ENCODE measurements at regions of chr1 and their contacts with region 1.

Region 1: GRCh38 chr1:171226747-171227370 is 21.4 kb upstream of the FMO1 start:
- DNase-seq: peak in 1 of 3 donors; percentile 30
- ATAC-seq: peak; percentile 78 to 79
- H3K4me3 ChIP-seq: no peak overlapping the region
- H3K27ac ChIP-seq: no peak overlapping the region
- H3K4me1 ChIP-seq: no peaks in the 10 kb centered on the region
- H3K27me3 ChIP-seq: no peaks in the 10 kb centered on the region

Region 2: GRCh38 chr1:170967042-170967910 is 259.6 kb before region 1 on chr1:
- intact Hi-C with region 1: loop called in 2 of 4 experiments (anchors 10 kb)
- DNase-seq: no peak
- ATAC-seq: peak; percentile 52 to 62
- H3K4me3 ChIP-seq: no peak overlapping the region
- H3K27ac ChIP-seq: no peak overlapping the region
- H3K4me1 ChIP-seq: no peaks in the 10 kb centered on the region
- H3K27me3 ChIP-seq: no peaks in the 10 kb centered on the region

Region 3: GRCh38 chr1:171081314-171081753 is 145.5 kb before region 1 on chr1:
- intact Hi-C with region 1: loop called in 2 of 4 experiments (anchors 2 to 5 kb)
- DNase-seq: no peak
- ATAC-seq: peak; percentile 42 to 66
- H3K4me3 ChIP-seq: no peak overlapping the region
- H3K27ac ChIP-seq: peak overlapping the region; percentile 61
- H3K4me1 ChIP-seq: peaks cover 4% of the 10 kb centered on the region
- H3K27me3 ChIP-seq: no peaks in the 10 kb centered on the region

Region 4: DNA sequence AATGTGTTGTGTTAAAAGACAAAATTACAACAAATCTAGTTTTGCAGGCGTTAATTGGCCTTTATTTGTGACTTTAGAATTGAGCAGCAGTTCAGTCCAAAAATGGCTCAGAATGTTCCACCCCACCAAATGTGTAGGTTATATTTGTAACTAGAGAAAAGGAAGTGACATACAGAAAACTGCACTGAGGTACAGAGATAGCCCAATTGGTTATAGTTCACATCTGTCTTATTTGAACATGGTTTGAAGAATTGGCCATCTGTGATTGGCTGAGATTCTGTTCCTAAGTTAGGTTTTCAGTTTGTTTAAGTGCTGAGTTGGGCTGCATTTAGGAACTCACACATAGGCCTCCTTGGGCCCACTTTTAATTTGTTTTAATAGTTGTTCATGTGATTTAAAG is 53.8 kb before region 1 on chr1:
- intact Hi-C with region 1: loop called in 1 of 4 experiments (anchors 10 kb)
- DNase-seq: no peak
- ATAC-seq: no peak
- H3K4me3 ChIP-seq: no peak overlapping the region
- H3K27ac ChIP-seq: no peak overlapping the region
- H3K4me1 ChIP-seq: no peaks in the 10 kb centered on the region
- H3K27me3 ChIP-seq: no peaks in the 10 kb centered on the region

Region 5: DNA sequence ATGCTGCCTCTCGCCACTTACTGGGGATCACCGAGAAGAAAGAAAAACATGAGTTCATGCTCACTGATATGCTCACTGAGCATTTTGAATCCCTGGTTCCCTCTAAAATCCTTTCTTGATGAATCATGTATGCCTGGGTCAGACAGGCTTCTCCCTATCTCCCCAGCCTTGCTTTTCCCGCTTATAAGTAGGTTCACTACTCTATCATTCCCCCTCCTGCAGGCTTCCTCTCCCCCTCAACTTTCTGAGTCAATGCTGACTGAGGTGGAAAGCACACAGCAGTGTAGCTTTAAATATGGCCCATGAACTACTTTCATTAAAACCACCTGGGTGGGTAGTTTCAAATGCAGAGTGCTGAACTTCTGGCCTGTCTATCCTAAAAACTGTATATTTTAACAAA is 128.9 kb after region 1 on chr1:
- intact Hi-C with region 1: no loop called
- DNase-seq: no peak
- ATAC-seq: no peak
- H3K4me3 ChIP-seq: no peak overlapping the region
- H3K27ac ChIP-seq: no peak overlapping the region
- H3K4me1 ChIP-seq: no peaks in the 10 kb centered on the region
- H3K27me3 ChIP-seq: no peaks in the 10 kb centered on the region